Posterior vena cava (tissue), 2 donors: ENCODE measurements at regions of chr13 and their contacts with region 1.

Region 1: DNA sequence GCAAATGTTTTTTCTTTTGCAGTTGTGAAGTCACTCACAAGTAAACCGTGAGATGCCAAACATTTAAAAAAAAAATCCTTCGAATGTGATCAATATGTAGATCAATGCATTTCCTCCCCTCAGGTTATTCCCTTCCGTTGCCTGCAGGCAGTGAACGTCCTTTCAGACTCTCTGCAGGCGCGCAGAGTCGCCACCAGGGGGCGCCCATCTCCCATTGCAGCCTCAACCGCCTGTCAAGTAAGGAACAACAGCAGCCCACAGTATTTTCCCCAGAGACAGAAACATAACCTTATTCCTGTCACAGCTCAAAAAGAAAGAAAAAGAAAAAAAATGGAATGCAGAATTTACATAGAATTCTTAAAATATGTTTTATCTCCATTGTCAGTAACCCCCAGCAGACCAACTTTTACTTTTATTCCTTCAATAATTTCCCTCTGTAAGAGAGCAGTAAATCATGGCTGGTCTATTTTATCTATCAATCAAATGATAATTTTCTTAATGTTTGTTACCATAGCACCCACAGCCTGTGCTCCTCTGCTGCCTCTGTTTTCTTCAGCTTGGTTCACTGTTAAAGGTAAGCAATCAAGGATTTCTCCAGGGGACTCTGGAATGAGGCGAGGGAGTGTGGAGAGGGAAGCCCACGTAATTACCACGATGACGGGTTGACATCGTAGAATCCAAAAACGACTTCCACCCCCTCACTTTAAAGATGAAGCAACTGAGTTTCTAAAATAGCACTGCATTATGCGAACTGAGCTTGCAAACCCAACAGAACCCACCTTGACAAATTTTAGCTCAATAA is 637.6 kb upstream of the ARGLU1 start:
- DNase-seq: no peak

Region 2: GRCh38 chr13:108155185-108156106 is 949.9 kb after region 1 on chr13:
- intact Hi-C with region 1: loop called in 1 of 2 experiments (anchors 10 kb)
- DNase-seq: peak; percentile 82